ENCODE measurements at regions of chr22 and their contacts with region 1.

Region 1: GRCh38 chr22:40147388-40148176 is 30.1 kb upstream of the TNRC6B start:
- DNase-seq: no peak
- ATAC-seq: no peak
- H3K4me3 ChIP-seq: no peak overlapping the region
- H3K27ac ChIP-seq: no peak overlapping the region
- H3K4me1 ChIP-seq: no peaks in the 10 kb centered on the region
- H3K27me3 ChIP-seq: no peaks in the 10 kb centered on the region
- CTCF ChIP-seq: no peak

Region 2: GRCh38 chr22:39859903-39860588 is 287.5 kb before region 1 on chr22:
- CTCF ChIA-PET with region 1: no interaction called
- POLR2A ChIA-PET with region 1: no interaction called
- intact Hi-C with region 1: no loop called
- DNase-seq: no peak
- ATAC-seq: no peak
- H3K4me3 ChIP-seq: no peak overlapping the region
- H3K27ac ChIP-seq: no peak overlapping the region
- H3K4me1 ChIP-seq: no peaks in the 10 kb centered on the region
- H3K27me3 ChIP-seq: peaks cover 48% of the 10 kb centered on the region
- CTCF ChIP-seq: no peak

Region 3: GRCh38 chr22:40121461-40121860 is 26.1 kb before region 1 on chr22:
- CTCF ChIA-PET with region 1: no interaction called
- POLR2A ChIA-PET with region 1: no interaction called
- intact Hi-C with region 1: no loop called
- DNase-seq: no peak
- ATAC-seq: no peak
- H3K4me3 ChIP-seq: no peak overlapping the region
- H3K27ac ChIP-seq: no peak overlapping the region
- H3K4me1 ChIP-seq: no peaks in the 10 kb centered on the region
- H3K27me3 ChIP-seq: no peaks in the 10 kb centered on the region
- CTCF ChIP-seq: no peak

Region 4: DNA sequence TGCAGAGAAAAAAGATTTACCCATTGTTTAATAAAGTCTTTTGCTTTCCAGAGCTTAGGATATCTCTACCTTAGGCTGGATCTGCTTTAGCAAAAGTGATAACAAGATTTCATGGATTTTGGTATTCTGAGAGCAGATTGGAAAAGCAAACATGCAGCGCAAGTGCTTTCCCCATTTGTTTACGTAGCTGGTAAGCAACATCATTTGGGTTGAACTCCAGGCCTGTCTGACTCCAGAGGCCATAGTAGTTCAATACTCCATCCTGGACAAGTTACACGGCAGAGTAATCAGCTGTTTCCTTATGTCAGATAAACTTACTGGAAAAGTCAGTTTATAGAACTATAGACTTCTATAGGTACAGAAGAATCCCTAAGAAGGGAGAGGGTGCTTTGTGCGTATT is 10.4 kb before region 1 on chr22:
- CTCF ChIA-PET with region 1: no interaction called
- POLR2A ChIA-PET with region 1: interaction called, 30 read pairs
- intact Hi-C with region 1: no loop called
- DNase-seq: no peak
- ATAC-seq: no peak
- H3K4me3 ChIP-seq: no peak overlapping the region
- H3K27ac ChIP-seq: no peak overlapping the region
- H3K4me1 ChIP-seq: no peaks in the 10 kb centered on the region
- H3K27me3 ChIP-seq: no peaks in the 10 kb centered on the region
- CTCF ChIP-seq: no peak

Region 5: GRCh38 chr22:40263191-40263590 is 115.6 kb after region 1 on chr22:
- CTCF ChIA-PET with region 1: no interaction called
- POLR2A ChIA-PET with region 1: no interaction called
- intact Hi-C with region 1: no loop called
- DNase-seq: no peak
- ATAC-seq: no peak
- H3K4me3 ChIP-seq: no peak overlapping the region
- H3K27ac ChIP-seq: no peak overlapping the region
- H3K4me1 ChIP-seq: peaks cover 13% of the 10 kb centered on the region
- H3K27me3 ChIP-seq: no peaks in the 10 kb centered on the region
- CTCF ChIP-seq: no peak